Caco-2 (cell line): ENCODE measurements at regions of chr11 and their contacts with region 1.

Region 1: DNA sequence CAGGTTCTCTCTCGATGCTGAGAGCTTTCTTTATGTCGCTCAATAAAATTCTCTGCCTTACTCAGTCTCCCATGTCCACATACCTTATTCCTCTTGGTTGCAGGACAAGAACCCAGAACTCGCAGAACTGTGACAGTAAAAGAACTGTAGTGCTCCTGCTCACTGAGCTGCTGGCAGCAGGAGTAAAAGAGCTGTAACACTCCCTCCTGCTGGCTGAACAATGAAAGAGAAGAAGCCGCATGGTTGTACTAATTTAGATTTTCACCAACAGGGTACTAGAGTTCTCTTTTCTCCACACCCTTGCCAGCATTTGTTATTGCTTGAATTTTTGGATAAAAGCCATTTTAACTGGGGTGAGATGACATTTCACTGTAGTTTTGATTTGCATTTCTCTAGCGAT is 433.2 kb downstream of the GUCY1A2 start:
- DNase-seq: peak; percentile 25 to 40
- H3K4me3 ChIP-seq: no peak overlapping the region
- H3K4me3 Mint-ChIP-seq: no peak overlapping the region
- H3K27ac Mint-ChIP-seq: no peak overlapping the region
- H3K4me1 ChIP-seq: 0 out of 2 replicates have a peak, but pooled peaks cover 3% of the 10 kb centered on the region
- H3K4me1 Mint-ChIP-seq: no peaks in the 10 kb centered on the region
- H3K27me3 ChIP-seq: no peaks in the 10 kb centered on the region
- H3K27me3 Mint-ChIP-seq: no peaks in the 10 kb centered on the region
- CTCF ChIP-seq: no peak

Region 2: DNA sequence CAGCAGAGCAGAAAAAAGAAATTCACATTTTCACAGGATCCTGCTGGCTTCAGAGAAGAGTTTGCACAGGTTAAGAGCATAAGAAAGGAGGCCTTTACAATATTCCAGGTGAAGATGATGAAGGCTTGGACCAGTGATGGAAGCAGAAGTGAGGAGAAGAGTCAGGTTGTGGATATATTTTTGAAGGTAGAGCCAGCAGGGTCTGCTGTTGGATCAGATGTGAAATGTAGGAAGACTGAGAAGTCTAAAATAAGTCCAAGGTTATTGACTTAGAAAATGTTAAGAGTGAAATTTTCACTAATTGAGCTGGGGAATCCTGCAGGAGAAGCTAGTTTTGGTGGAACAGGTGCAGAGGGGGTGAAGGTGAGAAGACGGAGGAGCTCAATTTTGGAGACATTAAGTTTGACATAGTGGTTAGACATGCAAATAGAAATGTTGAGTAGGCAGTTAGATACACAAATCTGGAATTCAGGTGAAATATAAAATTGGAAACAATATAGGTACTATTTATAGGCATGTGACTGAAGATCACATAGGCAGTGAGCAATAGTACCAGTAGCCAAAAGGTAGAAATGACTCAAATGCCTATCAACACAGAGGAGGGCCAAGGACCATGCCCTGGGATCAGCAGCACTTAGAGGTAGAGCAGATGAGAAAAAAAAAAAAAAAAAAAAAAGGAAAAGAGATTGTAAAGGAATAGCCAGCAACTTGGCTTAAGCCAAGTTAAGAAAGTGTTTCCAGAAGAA is 255.6 kb before region 1 on chr11:
- CTCF ChIA-PET with region 1: no interaction called
- POLR2A ChIA-PET with region 1: no interaction called
- intact Hi-C with region 1: loop called (anchors 10 kb)
- DNase-seq: no peak
- H3K4me3 ChIP-seq: no peak overlapping the region
- H3K4me3 Mint-ChIP-seq: no peak overlapping the region
- H3K27ac Mint-ChIP-seq: no peak overlapping the region
- H3K4me1 ChIP-seq: no peaks in the 10 kb centered on the region; the same call in 1 of the 2 replicates
- H3K4me1 Mint-ChIP-seq: no peaks in the 10 kb centered on the region
- H3K27me3 ChIP-seq: no peaks in the 10 kb centered on the region
- H3K27me3 Mint-ChIP-seq: no peaks in the 10 kb centered on the region
- CTCF ChIP-seq: no peak